Adrenal gland (tissue), 19 donors: ENCODE measurements at regions of chr1 and their contacts with region 1.

Region 1: DNA sequence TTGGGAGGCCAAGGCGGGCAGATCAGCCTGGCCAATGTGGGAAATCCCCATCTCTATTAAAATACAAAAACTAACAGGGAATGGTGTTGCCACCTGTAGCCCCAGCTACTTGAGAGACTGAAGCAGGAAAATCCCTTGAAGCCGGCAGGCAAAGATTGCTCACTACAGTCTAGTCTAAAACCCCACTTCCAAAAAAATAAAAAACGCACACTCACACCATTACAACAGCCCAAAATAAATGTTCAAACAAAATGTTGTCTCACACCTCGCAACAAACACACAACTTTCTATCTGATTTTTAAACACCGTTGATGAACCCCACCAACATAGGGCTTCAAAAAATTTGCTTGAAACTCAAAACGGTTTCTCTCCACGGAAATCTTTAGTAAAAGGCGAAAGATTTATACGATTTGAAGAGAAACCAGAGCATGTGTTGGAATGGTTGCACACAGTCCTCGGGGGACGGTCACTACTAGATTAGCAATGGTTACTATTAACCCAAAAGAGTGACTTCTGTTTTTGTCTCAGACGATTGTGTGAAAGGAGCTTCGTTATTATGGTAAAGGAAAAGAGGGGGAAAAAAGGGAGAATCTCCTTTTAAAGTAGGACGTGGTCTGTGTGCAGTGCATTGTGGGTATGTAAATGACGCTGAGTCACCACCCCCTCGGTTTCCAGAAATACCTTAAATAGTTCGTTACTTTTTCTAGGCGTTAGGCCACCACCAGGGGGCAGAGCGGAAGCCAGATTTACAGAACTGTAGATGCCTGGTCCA is at the start of gene RNU5D-1:
- DNase-seq: peak; percentile 93 to 99 (median 98)
- H3K4me3 ChIP-seq: peak within 1 kb of the TSS in 2 of 4 donors; percentile 6 to 38
- H3K27ac ChIP-seq: peak within 1 kb of the TSS; percentile 76 to 97 (median 88)
- H3K4me1 ChIP-seq: peaks cover 0 to 14% of the 10 kb centered on the region in 2 donors
- H3K27me3 ChIP-seq: no peaks in the 10 kb centered on the region
- CTCF ChIP-seq: peak; percentile 83 to 94 (median 90)
- POLR2A ChIP-seq: peak; percentile 86 to 99
- total RNA-seq, gene RNU5D-1: not detected

Region 2: DNA sequence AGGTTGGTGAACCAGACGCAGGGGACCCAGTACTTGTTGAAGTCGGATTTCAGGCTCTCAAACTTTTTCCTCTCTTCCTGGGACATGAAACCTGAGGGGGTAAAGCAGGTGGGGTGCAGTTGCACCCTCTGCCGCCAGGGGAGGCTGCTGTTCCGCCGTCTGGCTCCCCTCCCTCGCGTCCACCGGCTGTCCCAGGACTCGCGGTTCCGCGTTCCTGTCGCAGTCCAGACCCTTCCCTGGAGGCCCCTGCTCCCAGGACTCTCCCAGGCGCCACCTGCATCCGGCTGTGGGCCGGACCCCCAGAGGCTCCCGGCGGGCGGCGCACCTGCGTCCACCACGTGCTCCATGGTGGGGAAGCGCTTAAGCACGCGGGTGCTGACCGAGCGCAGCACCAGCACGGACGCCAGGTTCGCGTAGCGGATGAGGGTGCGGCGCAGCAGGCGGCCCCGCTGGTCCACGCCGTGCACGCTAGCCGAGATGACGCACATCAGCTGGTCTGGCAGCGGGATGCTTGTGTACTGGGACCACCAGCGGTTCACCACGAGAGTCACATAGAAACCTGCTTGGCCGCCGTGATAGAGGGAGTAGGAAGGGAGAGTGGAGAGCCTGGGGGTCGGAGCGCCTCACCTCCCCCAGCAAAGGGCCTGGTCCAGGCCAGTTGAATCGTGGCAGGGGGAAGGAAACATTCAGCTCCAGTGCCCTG is 55.4 kb after region 1 on chr1:
- intact Hi-C with region 1: loop called in 1 of 2 experiments (anchors 10 kb)
- DNase-seq: peak in 6 of 7 donors; percentile 70 to 81 (median 74)
- H3K4me3 ChIP-seq: peak overlapping the region in 2 of 4 donors; percentile 27 to 56
- H3K27ac ChIP-seq: peak overlapping the region in 2 of 5 donors; percentile 55 to 60
- H3K4me1 ChIP-seq: peaks cover 11 to 25% of the 10 kb centered on the region in 2 donors
- H3K27me3 ChIP-seq: no peaks in the 10 kb centered on the region
- CTCF ChIP-seq: peak; percentile 98 to 99 (median 99)
- POLR2A ChIP-seq: no peak